PC-3 (cell line): ENCODE measurements at regions of chr2 and their contacts with region 1.

Region 1: GRCh38 chr2:85826990-85827878 is 61.6 kb downstream of the ST3GAL5 start:
- DNase-seq: peak; percentile 73
- ATAC-seq: peak; percentile 97
- H3K4me3 ChIP-seq: peak overlapping the region; percentile 59
- H3K27ac ChIP-seq: no peak overlapping the region
- H3K4me1 ChIP-seq: no peaks in the 10 kb centered on the region
- H3K27me3 ChIP-seq: peaks cover 4% of the 10 kb centered on the region; the same call in 1 of the 2 replicates
- CTCF ChIP-seq: peak; percentile 90

Region 2: GRCh38 chr2:86011449-86011941 is 184.3 kb after region 1 on chr2:
- CTCF ChIA-PET with region 1: interaction called, 3 read pairs
- POLR2A ChIA-PET with region 1: no interaction called
- intact Hi-C with region 1: loop called (anchors 2 kb)
- DNase-seq: peak; percentile 78
- ATAC-seq: peak; percentile 100
- H3K4me3 ChIP-seq: no peak overlapping the region
- H3K27ac ChIP-seq: no peak overlapping the region
- H3K4me1 ChIP-seq: peaks cover 11% of the 10 kb centered on the region
- H3K27me3 ChIP-seq: no peaks in the 10 kb centered on the region
- CTCF ChIP-seq: no peak

Region 3: DNA sequence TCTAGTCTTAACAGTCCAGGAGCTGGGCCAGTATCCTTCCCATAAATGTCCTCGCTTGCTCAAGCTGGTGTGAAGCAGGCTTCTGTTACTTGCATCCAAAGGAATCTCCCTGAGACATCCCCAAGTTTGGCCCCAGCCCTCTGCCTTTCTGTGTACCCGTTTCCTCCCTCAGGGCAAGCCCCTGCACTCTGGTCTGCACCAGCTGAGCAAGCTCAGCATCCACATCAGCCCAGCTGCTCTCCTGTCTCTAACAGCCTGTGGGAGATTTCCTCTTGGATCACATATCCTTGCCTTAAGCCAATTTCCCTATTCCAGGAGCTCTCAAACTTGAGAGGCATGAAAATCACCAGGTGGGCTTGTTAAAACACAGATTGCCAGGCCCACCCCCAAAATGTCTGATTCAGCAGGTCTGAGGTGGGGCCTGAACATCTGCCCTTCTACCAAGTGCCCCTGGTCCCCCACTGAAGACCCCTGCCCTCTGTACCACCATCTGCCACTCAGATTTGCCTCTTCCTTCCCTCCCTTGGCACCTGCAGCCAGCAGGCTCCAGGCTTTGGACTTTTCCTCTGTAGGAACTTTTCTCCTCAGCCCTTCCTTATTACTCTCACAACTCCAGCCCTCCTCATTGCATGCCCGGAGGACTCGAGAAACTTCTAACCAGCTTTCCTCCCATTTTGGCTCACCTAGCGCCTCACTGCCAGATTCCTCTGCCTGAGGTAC is 478.1 kb after region 1 on chr2:
- CTCF ChIA-PET with region 1: no interaction called
- POLR2A ChIA-PET with region 1: no interaction called
- intact Hi-C with region 1: no loop called
- DNase-seq: no peak
- ATAC-seq: no peak
- H3K4me3 ChIP-seq: no peak overlapping the region
- H3K27ac ChIP-seq: no peak overlapping the region
- H3K4me1 ChIP-seq: no peaks in the 10 kb centered on the region
- H3K27me3 ChIP-seq: peaks cover 47% of the 10 kb centered on the region
- CTCF ChIP-seq: no peak